K562 (cell line): ENCODE measurements at regions of chr14 and their contacts with region 1.

Region 1: GRCh38 chr14:67426983-67427606 is 15.1 kb upstream of the PLEK2 start:
- DNase-seq: peak; percentile 62 to 76 (median 66)
- ATAC-seq: peak; percentile 86
- H3K4me3 ChIP-seq: no peak overlapping the region
- H3K27ac ChIP-seq: no peak overlapping the region; the same call in 2 of the 3 replicates
- H3K4me1 ChIP-seq: peaks cover 14 to 30% of the 10 kb centered on the region in 2 experiments; a peak in 4 of 5 replicates
- H3K27me3 ChIP-seq: no peaks in the 10 kb centered on the region; a peak in 1 of 5 replicates
- CTCF ChIP-seq: peak; percentile 69 to 77 (median 75)
- EP300 ChIP-seq: no peak
- POLR2A ChIP-seq: no peak
- RAD21 ChIP-seq: peak; percentile 54 to 75

Region 2: DNA sequence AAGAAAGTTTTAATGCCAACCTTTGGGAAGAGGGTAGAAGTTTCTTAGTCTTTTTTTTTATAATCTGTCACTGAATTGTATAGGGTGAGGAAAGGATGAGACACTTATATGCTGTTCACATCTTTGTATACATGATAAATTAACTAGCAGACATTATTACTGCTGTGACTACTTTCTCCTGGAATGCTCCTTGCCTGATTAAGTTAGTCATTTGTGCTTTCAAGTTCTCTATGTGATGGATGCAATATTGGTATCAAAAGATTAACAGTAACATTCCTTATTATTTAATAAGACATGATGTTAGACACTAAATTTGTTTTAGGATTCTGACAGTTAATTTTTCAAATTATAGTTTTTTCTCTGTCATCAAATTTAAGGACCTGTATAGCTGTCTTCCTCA is 461.3 kb before region 1 on chr14:
- CTCF ChIA-PET with region 1: no interaction called
- POLR2A ChIA-PET with region 1: no interaction called
- in situ Hi-C with region 1: no loop called
- intact Hi-C with region 1: no loop called
- DNase-seq: no peak
- ATAC-seq: no peak
- H3K4me3 ChIP-seq: no peak overlapping the region
- H3K27ac ChIP-seq: no peak overlapping the region
- H3K4me1 ChIP-seq: no peaks in the 10 kb centered on the region
- H3K27me3 ChIP-seq: no peaks in the 10 kb centered on the region
- CTCF ChIP-seq: no peak
- EP300 ChIP-seq: no peak
- POLR2A ChIP-seq: no peak
- RAD21 ChIP-seq: no peak

Region 3: DNA sequence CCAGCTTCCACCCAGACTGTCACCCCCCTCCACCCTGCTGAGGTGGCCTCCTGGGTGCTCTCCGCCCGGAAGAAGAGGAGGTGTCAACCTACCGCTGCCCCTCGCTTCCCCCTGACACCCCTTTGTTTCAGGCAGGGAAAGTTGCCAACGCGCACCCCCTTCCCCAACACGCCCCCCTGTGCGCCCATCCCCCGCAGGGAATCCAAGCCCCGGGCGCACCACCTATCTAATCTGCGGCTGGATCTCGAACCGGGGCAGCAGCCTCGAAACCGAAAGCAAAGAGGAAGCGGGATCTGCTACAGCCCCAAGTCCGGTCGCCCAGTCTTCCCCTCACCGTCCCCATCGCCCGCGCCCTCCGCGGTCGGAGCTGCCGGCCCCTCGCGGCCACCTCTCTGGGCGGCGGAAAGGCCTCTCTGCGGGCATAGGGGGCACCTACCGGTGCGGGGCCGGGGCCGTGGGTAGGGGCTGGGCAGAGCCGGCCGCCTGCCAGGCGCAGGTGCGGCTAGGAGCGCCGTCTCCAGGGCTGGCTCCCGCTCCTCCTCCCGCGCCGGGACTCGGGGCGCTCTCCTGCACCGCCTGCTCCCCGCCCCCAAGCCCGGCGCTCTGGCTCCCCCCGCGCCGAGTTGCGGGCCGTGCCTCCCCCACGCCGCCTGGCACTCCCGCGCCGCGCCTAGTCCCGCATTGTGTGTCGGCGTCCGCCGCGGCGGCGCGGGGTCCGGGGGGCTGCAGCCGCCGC is 87.7 kb after region 1 on chr14:
- CTCF ChIA-PET with region 1: no interaction called
- POLR2A ChIA-PET with region 1: interaction called, 3 read pairs
- in situ Hi-C with region 1: no loop called
- intact Hi-C with region 1: loop called (anchors 5 kb)
- DNase-seq: peak; percentile 8 to 66 (median 46)
- ATAC-seq: peak; percentile 64
- H3K4me3 ChIP-seq: peak overlapping the region; percentile 42
- H3K27ac ChIP-seq: no peak overlapping the region
- H3K4me1 ChIP-seq: peaks cover 0 to 16% of the 10 kb centered on the region in 2 experiments; a peak in 2 of 5 replicates
- H3K27me3 ChIP-seq: peaks cover 6 to 40% of the 10 kb centered on the region in 2 experiments; a peak in 3 of 5 replicates
- CTCF ChIP-seq: no peak
- EP300 ChIP-seq: no peak
- POLR2A ChIP-seq: no peak
- RAD21 ChIP-seq: no peak

Region 4: DNA sequence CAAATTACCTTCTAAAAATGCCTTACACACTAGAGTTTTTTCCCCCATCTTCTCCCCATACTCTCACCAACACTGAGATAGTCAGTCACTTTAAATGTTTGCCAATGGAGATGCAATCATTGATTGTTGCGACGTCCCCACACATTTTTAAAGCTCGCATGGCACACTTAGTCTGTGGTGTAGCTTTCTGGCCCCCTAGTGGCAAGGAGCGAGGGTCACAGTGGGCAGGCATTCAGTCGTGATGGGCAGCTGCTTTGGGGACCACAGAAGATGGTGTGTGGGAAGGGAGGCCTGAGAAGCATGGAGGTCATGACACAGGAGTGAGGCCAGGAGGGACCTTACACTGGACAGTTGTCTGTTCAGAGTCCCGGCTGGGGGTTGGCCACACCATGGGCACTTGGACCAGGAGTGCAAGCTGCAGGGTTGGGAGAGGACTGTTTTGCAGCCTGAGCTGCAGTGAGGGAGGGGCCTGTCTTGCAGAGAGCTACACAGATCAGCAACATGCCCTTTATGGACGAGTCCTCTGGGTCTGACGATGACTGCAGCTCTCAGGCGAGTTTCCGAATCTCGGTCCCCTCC is 144.3 kb after region 1 on chr14:
- CTCF ChIA-PET with region 1: interaction called, 3 read pairs
- POLR2A ChIA-PET with region 1: no interaction called
- in situ Hi-C with region 1: loop called (anchors 10 kb)
- intact Hi-C with region 1: loop called (anchors 1 kb)
- DNase-seq: peak; percentile 54 to 64 (median 59)
- ATAC-seq: peak; percentile 95
- H3K4me3 ChIP-seq: no peak overlapping the region
- H3K27ac ChIP-seq: no peak overlapping the region
- H3K4me1 ChIP-seq: peaks cover 0 to 5% of the 10 kb centered on the region in 2 experiments; a peak in 2 of 5 replicates
- H3K27me3 ChIP-seq: no peaks in the 10 kb centered on the region
- CTCF ChIP-seq: peak; percentile 79 to 84 (median 83)
- EP300 ChIP-seq: no peak
- POLR2A ChIP-seq: no peak
- RAD21 ChIP-seq: peak; percentile 75 to 83